CD4-positive, alpha-beta memory T cell (primary cell): ENCODE measurements at regions of chr5 and their contacts with region 1.

Region 1: GRCh38 chr5:14399054-14399692 is 182.4 kb upstream of the OTULINL start:
- DNase-seq: peak in 4 of 5 donors; percentile 27 to 51 (median 44)
- H3K4me3 ChIP-seq: no peak overlapping the region
- H3K4me3 Mint-ChIP-seq: no peak overlapping the region
- H3K27ac ChIP-seq: no peak overlapping the region
- H3K27ac Mint-ChIP-seq: no peak overlapping the region
- H3K4me1 ChIP-seq: no peaks in the 10 kb centered on the region
- H3K4me1 Mint-ChIP-seq: peaks cover 3 to 12% (median 7%) of the 10 kb centered on the region in 4 donors
- H3K27me3 ChIP-seq: no peaks in the 10 kb centered on the region
- H3K27me3 Mint-ChIP-seq: peaks cover 1 to 4% of the 10 kb centered on the region in 2 donors

Region 2: DNA sequence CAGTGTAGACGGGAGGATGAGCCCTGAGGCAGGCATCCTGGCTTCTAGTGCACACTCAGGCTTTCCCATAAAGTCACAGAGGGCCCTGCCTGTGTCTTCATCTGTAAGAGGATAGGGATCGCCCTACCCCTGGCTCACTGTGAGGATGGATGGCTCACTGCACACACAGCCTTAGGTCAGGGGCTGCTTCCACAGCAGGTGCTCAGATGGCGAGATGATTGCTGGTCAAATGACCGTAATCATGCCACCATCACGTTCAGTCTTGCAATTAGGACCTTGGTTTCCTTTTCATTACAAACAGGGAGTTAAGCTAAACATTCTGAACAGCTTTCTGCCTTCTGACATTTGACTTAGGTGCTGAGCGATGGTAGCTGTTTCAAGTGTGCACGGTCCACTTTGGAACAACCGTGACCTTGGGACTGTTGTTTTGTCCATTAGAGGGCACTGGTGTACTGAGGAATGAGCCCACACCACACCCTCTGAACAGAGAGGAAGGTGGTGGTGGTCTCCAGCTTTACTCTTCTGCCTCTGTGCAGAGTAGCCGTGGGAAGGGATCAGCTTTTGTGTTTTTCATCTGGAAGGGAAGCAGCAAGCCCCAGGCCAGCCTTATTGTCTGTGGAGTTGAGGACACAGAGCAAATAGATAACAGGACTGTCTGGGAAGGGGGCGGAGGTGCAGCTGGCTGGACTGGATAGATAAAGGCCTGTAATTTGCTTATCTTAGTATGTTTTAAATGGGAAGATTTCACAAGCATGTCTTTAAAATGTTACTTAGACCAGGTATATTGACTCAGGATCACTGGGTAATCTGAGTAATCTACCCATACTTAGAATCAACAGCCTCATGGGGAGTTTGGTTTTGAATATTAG is 72.9 kb before region 1 on chr5:
- CTCF ChIA-PET with region 1: no interaction called
- POLR2A ChIA-PET with region 1: no interaction called
- intact Hi-C with region 1: no loop called
- DNase-seq: no peak
- H3K4me3 ChIP-seq: no peak overlapping the region
- H3K4me3 Mint-ChIP-seq: no peak overlapping the region
- H3K27ac ChIP-seq: no peak overlapping the region
- H3K27ac Mint-ChIP-seq: no peak overlapping the region
- H3K4me1 ChIP-seq: no peaks in the 10 kb centered on the region
- H3K4me1 Mint-ChIP-seq: peaks cover 0 to 4% (median under 1%) of the 10 kb centered on the region in 4 donors
- H3K27me3 ChIP-seq: no peaks in the 10 kb centered on the region
- H3K27me3 Mint-ChIP-seq: peaks cover 0 to 7% of the 10 kb centered on the region in 2 donors

Region 3: DNA sequence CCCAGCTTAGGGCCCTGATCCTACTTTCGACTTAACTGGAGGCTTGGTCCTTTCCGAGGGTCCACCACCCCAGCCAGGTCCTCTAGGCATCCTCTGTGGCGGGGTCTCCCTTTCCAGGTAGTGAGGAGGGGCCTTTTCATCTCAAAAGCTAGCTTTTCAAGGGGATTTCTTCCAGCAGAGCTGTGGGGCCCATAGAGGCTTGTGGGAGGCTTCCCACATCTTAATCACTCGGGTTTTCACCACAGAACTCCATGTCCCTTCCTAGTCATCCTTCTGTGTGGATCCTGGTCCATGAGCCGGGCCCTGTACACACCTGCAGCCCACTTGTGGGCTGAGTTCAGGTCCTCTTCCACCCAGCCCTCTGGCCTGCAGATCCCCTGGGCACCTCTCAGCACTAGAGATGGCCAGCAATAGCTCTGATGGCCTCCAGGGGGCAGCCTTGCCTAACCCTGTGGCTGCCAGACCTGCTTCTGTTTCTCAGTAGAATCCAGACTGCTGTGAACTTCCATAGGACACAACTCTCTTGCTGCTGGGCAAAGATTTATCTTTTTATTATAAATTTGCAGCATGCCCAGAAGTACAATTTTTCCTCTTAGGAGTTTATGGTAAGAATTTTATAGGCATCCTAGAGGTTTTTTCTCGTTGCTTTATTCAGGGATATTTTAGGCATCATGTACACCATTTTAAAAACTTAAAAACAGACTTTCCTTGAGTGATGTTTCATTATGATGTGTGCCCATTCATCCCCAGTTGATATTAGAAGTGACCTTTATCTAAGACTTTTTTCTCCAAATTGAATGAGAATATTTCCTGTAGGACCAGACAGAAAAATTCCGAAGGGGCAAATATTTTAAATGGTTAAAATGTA is 47.1 kb before region 1 on chr5:
- CTCF ChIA-PET with region 1: interaction called, 4 read pairs
- POLR2A ChIA-PET with region 1: no interaction called
- intact Hi-C with region 1: loop called (anchors 2 kb)
- DNase-seq: peak; percentile 46 to 58 (median 57)
- H3K4me3 ChIP-seq: no peak overlapping the region
- H3K4me3 Mint-ChIP-seq: no peak overlapping the region
- H3K27ac ChIP-seq: no peak overlapping the region
- H3K27ac Mint-ChIP-seq: no peak overlapping the region
- H3K4me1 ChIP-seq: no peaks in the 10 kb centered on the region
- H3K4me1 Mint-ChIP-seq: no peaks in the 10 kb centered on the region
- H3K27me3 ChIP-seq: no peaks in the 10 kb centered on the region
- H3K27me3 Mint-ChIP-seq: peaks cover 2% of the 10 kb centered on the region in 2 donors

Region 4: DNA sequence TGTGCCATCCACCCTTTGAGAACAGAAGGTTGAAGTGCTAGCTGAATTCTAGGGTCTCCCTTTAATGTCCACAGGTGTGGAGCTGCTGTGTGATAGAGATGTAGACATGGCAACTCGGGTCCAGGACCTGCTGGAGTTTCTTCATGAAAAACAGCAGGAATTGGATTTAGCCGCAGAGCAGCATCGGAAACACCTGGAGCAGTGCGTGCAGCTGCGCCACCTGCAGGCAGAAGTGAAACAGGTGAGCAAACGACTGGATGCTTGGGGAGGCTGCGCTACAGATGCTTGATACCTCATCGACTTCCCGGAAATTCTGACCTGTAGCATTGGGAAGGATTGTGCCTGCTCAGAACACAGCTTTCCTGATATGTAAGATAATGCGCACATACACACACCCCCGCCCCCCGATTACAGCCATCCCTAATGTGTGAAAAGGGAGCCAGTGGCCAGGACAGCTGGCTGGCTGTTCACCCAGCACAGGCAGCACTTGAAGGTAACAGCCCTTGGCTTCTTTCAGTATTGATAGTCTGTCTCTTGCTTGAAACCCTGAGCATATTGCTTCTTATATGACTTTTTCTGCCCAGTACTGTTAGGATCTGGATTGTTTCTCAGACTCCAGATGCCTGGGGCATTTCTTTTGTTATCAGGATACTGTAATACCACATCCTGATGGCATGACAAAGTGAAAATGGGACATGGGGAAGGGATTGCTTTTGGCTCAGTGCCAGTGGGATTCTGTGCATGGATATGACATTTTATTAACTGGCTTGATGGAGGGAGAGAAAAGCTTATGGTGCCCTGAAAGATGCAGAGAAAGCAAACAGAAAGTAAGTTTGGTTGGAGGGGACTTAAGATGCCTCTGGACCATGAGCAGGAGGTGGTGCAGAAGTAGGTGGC is 34.3 kb before region 1 on chr5:
- CTCF ChIA-PET with region 1: interaction called, 12 read pairs
- POLR2A ChIA-PET with region 1: no interaction called
- intact Hi-C with region 1: loop called (anchors 2 kb)
- DNase-seq: no peak
- H3K4me3 ChIP-seq: no peak overlapping the region
- H3K4me3 Mint-ChIP-seq: peak overlapping the region in 1 of 8 donors; percentile 5
- H3K27ac ChIP-seq: no peak overlapping the region
- H3K27ac Mint-ChIP-seq: peak overlapping the region in 4 of 7 donors; percentile 0 to 66 (median 48)
- H3K4me1 ChIP-seq: peaks cover 28% of the 10 kb centered on the region
- H3K4me1 Mint-ChIP-seq: peaks cover 13 to 33% (median 25%) of the 10 kb centered on the region in 4 donors
- H3K27me3 ChIP-seq: no peaks in the 10 kb centered on the region
- H3K27me3 Mint-ChIP-seq: peaks cover 2% of the 10 kb centered on the region in 2 donors

Region 5: GRCh38 chr5:14415024-14415697 is 16.0 kb after region 1 on chr5:
- CTCF ChIA-PET with region 1: interaction called, 29 read pairs
- POLR2A ChIA-PET with region 1: interaction called, 7 read pairs
- intact Hi-C with region 1: loop called (anchors 1 kb)
- DNase-seq: peak in 4 of 5 donors; percentile 13 to 19 (median 16)
- H3K4me3 ChIP-seq: peak overlapping the region in 1 of 2 donors; percentile 29
- H3K4me3 Mint-ChIP-seq: peak overlapping the region; percentile 48 to 79 (median 63)
- H3K27ac ChIP-seq: peak overlapping the region; percentile 58
- H3K27ac Mint-ChIP-seq: peak overlapping the region; percentile 83 to 98 (median 95)
- H3K4me1 ChIP-seq: peaks cover 47% of the 10 kb centered on the region
- H3K4me1 Mint-ChIP-seq: peaks cover 32 to 66% (median 46%) of the 10 kb centered on the region in 4 donors
- H3K27me3 ChIP-seq: no peaks in the 10 kb centered on the region
- H3K27me3 Mint-ChIP-seq: peaks cover 0 to 2% of the 10 kb centered on the region in 2 donors

Region 6: GRCh38 chr5:14521748-14522147 is 122.6 kb after region 1 on chr5:
- CTCF ChIA-PET with region 1: no interaction called
- POLR2A ChIA-PET with region 1: no interaction called
- intact Hi-C with region 1: no loop called
- DNase-seq: no peak
- H3K4me3 ChIP-seq: no peak overlapping the region
- H3K4me3 Mint-ChIP-seq: no peak overlapping the region
- H3K27ac ChIP-seq: no peak overlapping the region
- H3K27ac Mint-ChIP-seq: peak overlapping the region in 1 of 7 donors; percentile 66
- H3K4me1 ChIP-seq: no peaks in the 10 kb centered on the region
- H3K4me1 Mint-ChIP-seq: no peaks in the 10 kb centered on the region
- H3K27me3 ChIP-seq: no peaks in the 10 kb centered on the region
- H3K27me3 Mint-ChIP-seq: peaks cover 4 to 18% of the 10 kb centered on the region in 2 donors